Activated CD4-positive, alpha-beta T cell treated with anti-CD3 and anti-CD28 coated beads for 36 hours (primary cell): ENCODE measurements at regions of chr3 and their contacts with region 1.

Region 1: GRCh38 chr3:158109804-158110657 is at the start of gene RSRC1:
- DNase-seq: peak; percentile 88
- ATAC-seq: peak; percentile 80
- H3K4me3 Mint-ChIP-seq: peak within 1 kb of the TSS; percentile 95
- H3K27ac Mint-ChIP-seq: peak within 1 kb of the TSS; percentile 81
- H3K4me1 Mint-ChIP-seq: peaks cover 52% of the 10 kb centered on the region
- H3K27me3 Mint-ChIP-seq: peaks cover 26% of the 10 kb centered on the region
- total RNA-seq, gene RSRC1: 44.9 to 61.6 TPM

Region 2: DNA sequence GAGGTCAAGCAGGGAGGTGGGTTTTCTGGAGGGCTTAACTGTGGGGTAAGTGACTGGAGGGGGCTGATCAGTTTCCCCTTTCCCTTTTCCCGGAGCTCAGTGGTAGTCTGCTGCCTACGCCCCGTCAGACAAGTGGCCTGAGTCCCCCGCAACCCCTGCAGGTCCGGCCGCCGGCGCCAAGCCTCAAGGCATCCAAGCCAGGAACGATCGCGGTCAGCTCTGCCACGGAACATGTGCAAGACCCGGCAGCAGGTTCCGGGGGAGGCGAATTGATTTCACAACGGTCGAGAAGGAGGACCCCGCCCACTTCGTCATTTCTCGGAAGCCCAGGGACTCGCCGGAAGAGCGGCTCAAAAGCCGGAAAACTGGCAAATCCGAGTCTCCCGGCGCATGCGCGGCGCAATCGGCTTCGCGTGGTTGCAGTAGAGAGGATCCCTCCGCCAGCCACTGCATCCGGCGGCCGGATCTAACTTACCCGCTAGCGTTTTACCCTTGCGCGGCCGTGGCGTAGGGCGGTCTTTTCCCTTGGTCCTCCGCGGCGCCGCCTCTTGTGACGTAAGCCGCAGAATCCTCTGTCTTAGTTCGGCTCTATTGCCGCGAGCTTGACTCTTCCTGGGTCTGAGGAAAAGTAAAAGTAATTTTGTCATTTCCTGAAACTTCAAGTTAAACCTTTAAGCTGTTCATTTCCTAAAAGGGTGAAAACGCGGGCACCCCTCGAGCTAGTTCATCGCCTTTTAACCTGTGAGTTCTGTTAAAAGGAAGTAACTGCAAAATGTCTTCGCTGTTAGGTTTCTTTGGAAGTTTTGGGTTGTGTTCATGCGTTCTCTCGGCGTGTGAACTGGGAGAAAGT is 935.2 kb before region 1 on chr3:
- CTCF ChIA-PET with region 1: no interaction called
- POLR2A ChIA-PET with region 1: no interaction called
- intact Hi-C with region 1: loop called in 1 of 2 experiments (anchors 5 kb)
- DNase-seq: peak; percentile 99
- ATAC-seq: peak; percentile 95
- H3K4me3 Mint-ChIP-seq: peak overlapping the region; percentile 94
- H3K27ac Mint-ChIP-seq: peak overlapping the region; percentile 99
- H3K4me1 Mint-ChIP-seq: peaks cover 20% of the 10 kb centered on the region
- H3K27me3 Mint-ChIP-seq: no peaks in the 10 kb centered on the region

Region 3: DNA sequence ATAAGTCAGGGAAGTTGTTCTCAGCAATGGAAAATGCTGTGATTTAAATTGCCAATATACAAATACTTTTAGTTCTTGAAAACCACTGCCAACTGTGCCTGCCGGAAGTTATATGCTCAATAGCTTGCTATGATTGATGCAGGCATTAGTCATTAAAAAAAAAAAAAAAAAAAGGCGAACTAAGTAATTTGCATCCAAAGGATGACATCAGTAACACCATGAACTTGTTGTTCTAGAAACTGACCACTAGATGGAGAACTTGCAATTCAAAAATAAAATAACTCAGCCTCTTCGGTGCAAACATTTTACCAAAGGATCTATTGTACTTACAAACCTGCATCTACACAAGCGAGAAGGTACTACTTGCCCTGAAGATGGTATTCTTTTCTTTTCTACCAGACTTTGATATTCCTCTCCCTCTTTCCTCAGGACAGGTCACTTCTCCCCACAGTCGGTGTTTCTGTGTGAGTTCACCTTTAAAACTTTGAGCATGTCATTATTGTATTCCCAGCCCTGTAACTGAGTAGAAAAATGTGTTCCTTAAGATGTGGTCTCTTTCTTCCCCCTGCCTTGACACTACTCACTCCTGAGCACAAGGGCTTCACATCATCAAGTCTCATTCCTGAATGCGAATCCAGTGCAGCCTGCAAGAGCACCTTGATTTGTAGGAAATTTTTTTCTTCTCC is 491.8 kb before region 1 on chr3:
- CTCF ChIA-PET with region 1: no interaction called
- POLR2A ChIA-PET with region 1: no interaction called
- intact Hi-C with region 1: loop called (anchors 5 kb)
- DNase-seq: peak; percentile 49
- ATAC-seq: peak; percentile 95
- H3K4me3 Mint-ChIP-seq: no peak overlapping the region
- H3K27ac Mint-ChIP-seq: no peak overlapping the region
- H3K4me1 Mint-ChIP-seq: peaks cover 9% of the 10 kb centered on the region
- H3K27me3 Mint-ChIP-seq: peaks cover 8% of the 10 kb centered on the region

Region 4: GRCh38 chr3:158097593-158098308 is 12.3 kb before region 1 on chr3:
- CTCF ChIA-PET with region 1: interaction called, 6 read pairs
- POLR2A ChIA-PET with region 1: interaction called, 3 read pairs
- intact Hi-C with region 1: loop called (anchors 1 kb)
- DNase-seq: peak; percentile 86
- ATAC-seq: peak; percentile 96
- H3K4me3 Mint-ChIP-seq: peak overlapping the region; percentile 84
- H3K27ac Mint-ChIP-seq: peak overlapping the region; percentile 45
- H3K4me1 Mint-ChIP-seq: peaks cover 23% of the 10 kb centered on the region
- H3K27me3 Mint-ChIP-seq: peaks cover 75% of the 10 kb centered on the region

Region 5: DNA sequence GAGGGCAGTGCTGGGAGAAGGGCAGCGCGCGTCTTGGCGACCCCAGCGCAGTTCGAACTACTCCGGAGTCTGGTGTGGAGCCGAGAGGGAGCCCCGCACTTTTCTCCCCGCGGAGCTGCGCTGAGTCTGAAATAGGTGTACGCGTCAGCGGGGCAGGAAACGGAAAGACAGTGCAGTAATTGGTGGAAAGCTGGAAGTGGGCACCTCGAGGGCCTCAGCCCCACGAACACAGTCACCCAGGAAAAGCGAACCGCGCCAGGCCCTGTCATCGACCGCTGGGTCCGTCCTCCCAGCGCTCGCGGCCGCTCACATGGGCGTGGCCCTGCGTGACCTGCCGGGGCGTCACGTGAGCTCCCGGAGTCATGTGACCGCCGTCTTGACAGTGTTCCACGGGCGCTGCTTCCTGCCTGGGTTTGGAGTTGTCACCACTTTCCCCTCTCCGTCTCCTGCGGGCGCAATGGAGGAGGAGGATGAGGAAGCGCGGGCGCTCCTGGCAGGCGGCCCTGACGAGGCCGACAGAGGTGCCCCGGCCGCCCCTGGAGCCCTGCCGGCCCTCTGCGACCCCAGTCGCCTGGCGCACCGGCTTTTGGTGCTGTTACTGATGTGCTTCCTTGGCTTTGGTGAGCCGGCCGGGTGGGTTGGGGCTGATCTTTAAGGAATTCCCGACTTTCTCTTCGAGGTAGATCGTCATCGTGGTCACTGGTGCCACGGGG is 691.8 kb after region 1 on chr3 and contains the start of gene MFSD1:
- CTCF ChIA-PET with region 1: no interaction called
- POLR2A ChIA-PET with region 1: no interaction called
- intact Hi-C with region 1: loop called in 1 of 2 experiments (anchors 2 kb)
- DNase-seq: peak; percentile 94
- ATAC-seq: peak; percentile 92
- H3K4me3 Mint-ChIP-seq: peak within 1 kb of the TSS; percentile 81
- H3K27ac Mint-ChIP-seq: peak within 1 kb of the TSS; percentile 87
- H3K4me1 Mint-ChIP-seq: peaks cover 22% of the 10 kb centered on the region
- H3K27me3 Mint-ChIP-seq: no peaks in the 10 kb centered on the region
- total RNA-seq, gene MFSD1: 6.9 to 13.1 TPM

Region 6: DNA sequence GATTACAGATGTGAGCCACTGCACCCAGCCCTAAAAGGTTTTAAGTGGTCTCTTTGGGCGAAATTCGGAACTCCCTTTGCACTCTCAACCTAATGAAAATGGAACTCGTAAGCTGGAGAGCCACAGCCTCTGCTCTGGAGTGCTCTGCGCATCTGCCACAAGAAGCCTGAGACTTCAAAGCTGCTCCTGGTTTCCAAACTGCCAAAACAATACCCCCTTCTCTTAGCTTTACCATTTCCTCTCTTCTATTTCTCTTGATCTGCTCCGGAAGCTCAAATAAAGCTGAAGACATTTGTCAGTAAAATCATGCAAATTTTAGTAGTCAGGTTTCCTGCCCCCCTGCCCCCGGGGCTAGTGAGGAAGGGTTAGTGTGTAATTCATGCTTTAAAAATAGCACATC is 1004.6 kb after region 1 on chr3:
- CTCF ChIA-PET with region 1: no interaction called
- POLR2A ChIA-PET with region 1: no interaction called
- intact Hi-C with region 1: no loop called
- DNase-seq: no peak
- ATAC-seq: no peak
- H3K4me3 Mint-ChIP-seq: no peak overlapping the region
- H3K27ac Mint-ChIP-seq: no peak overlapping the region
- H3K4me1 Mint-ChIP-seq: no peaks in the 10 kb centered on the region
- H3K27me3 Mint-ChIP-seq: peaks cover 2% of the 10 kb centered on the region